ENCODE measurements at regions of chr6 and their contacts with region 1.

Region 1: GRCh38 chr6:129370268-129370916 is 339.6 kb downstream of the ARHGAP18 start:
- DNase-seq: peak; percentile 24
- H3K4me3 ChIP-seq: peak overlapping the region in 1 of 2 experiments; percentile 43; a peak in 1 of 4 replicates
- H3K27ac ChIP-seq: no peak overlapping the region
- H3K4me1 ChIP-seq: no peaks in the 10 kb centered on the region
- H3K27me3 ChIP-seq: no peaks in the 10 kb centered on the region
- CTCF ChIP-seq: peak; percentile 90
- EP300 ChIP-seq: no peak
- RAD21 ChIP-seq: peak; percentile 51

Region 2: DNA sequence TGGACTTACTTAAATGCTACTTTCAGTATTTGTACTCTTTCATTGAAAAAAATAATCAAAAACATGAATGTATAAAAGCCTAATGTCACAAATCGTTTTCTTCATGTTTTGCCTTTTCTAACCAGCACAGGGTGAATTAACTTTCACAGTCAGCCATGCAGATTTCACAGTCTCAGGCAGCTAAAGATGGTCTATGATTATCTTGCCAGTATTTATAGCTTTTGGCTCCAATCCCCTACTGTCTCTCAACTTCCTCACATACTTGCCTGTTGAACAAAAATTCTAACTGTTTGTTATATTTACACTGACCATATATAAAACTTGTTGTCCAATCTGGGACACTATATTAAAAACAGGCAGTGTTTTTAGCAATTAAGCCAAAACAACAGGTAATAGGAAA is 18.6 kb before region 1 on chr6:
- CTCF ChIA-PET with region 1: interaction called, 16 read pairs
- POLR2A ChIA-PET with region 1: no interaction called
- DNase-seq: no peak
- H3K4me3 ChIP-seq: no peak overlapping the region
- H3K27ac ChIP-seq: no peak overlapping the region
- H3K4me1 ChIP-seq: no peaks in the 10 kb centered on the region
- H3K27me3 ChIP-seq: peaks cover 5% of the 10 kb centered on the region; the same call in 1 of the 2 replicates
- CTCF ChIP-seq: no peak
- EP300 ChIP-seq: no peak
- RAD21 ChIP-seq: no peak

Region 3: GRCh38 chr6:129359811-129360681 is 10.3 kb before region 1 on chr6:
- CTCF ChIA-PET with region 1: interaction called, 10 read pairs
- POLR2A ChIA-PET with region 1: no interaction called
- DNase-seq: no peak
- H3K4me3 ChIP-seq: no peak overlapping the region
- H3K27ac ChIP-seq: no peak overlapping the region
- H3K4me1 ChIP-seq: no peaks in the 10 kb centered on the region
- H3K27me3 ChIP-seq: peaks cover 5% of the 10 kb centered on the region; the same call in 1 of the 2 replicates
- CTCF ChIP-seq: no peak
- EP300 ChIP-seq: no peak
- RAD21 ChIP-seq: no peak

Measured in SK-N-SH (cell line).